ENCODE measurements at regions of chr21 and their contacts with region 1.

Region 1: DNA sequence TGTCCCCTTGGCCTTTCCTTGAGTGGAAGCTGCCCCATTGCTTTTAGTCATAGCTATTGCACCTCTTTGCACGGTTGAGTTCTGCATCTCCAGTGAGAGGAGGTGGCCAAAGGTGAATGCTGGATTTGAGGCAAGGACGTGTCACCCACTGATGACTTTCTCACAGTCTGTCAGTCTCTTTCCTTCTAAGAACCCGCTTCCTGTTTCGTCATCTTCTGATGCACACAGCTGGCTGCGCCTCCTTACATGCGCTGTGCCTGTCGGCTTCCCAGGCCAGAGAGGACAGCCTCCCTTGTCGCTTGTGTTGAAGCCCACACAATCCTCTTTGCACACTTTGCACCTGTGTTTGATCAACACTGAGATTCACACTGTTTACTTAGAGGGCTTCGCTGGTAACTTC is 41.8 kb upstream of the PWP2 start:
- DNase-seq: peak; percentile 82
- H3K4me3 Mint-ChIP-seq: peak overlapping the region; percentile 64
- H3K27ac Mint-ChIP-seq: peak overlapping the region; percentile 94
- H3K4me1 Mint-ChIP-seq: peaks cover 32% of the 10 kb centered on the region
- H3K27me3 Mint-ChIP-seq: no peaks in the 10 kb centered on the region

Region 2: GRCh38 chr21:43362321-43362791 is 703.1 kb before region 1 on chr21:
- CTCF ChIA-PET with region 1: no interaction called
- intact Hi-C with region 1: no loop called
- DNase-seq: peak; percentile 81
- H3K4me3 Mint-ChIP-seq: peak overlapping the region; percentile 68
- H3K27ac Mint-ChIP-seq: peak overlapping the region; percentile 27
- H3K4me1 Mint-ChIP-seq: peaks cover 26% of the 10 kb centered on the region
- H3K27me3 Mint-ChIP-seq: no peaks in the 10 kb centered on the region

Region 3: DNA sequence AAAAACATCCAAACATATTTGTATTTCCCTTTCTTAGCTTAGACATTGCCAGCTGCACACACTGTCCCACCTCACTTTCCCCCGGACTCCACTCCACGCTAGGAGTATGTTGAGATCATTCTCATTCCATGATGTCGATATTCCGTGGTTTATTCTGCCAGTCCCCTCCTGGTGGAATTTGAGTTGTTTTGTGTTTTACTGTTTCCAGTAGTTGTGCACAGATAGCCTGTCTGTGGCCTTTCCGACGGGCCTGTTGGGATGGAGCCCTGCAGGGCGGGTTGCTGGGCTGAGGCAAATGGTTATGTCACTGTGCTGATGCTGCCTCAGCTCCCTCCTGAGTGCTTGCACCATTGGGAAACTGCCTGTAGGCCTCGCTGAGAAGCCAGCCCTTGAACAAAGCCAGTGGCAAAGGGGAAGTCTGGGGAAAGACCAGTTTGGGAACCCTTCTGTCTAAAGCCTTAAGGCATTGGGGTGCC is 40.5 kb before region 1 on chr21:
- CTCF ChIA-PET with region 1: no interaction called
- intact Hi-C with region 1: loop called (anchors 1 kb)
- DNase-seq: peak; percentile 35
- H3K4me3 Mint-ChIP-seq: no peak overlapping the region
- H3K27ac Mint-ChIP-seq: peak overlapping the region; percentile 81
- H3K4me1 Mint-ChIP-seq: peaks cover 81% of the 10 kb centered on the region
- H3K27me3 Mint-ChIP-seq: no peaks in the 10 kb centered on the region

Region 4: DNA sequence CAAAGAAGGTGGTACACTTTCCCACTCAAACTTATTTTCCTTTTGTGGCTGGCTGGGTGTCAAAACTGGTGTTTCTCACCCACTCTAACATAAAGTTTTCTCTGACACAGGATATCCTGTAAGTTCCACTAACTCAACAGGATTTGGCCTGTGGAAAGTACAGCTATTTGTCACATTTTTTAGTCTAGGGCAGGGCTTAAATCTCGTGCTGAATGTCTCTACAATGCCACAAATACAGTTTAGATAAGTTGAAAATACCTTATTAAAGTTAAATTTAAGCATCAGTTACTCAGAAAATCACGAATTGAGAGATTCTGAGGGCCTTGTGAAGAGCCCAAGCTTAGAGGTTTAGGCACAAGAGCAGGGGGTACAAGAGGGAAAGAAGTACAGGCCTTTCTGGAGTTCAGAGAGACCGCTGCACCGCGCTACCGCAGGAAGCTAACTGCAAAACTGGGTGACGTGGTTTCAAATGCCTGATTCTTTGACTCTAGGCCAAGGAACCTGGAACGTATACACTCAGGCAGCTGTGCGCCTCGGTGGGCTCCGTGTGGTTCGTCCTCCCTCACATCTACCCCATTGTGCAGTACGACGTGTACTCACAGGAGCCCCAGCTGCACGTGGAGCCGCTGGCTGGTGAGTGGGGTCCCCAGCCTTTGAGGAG is 18.3 kb after region 1 on chr21:
- CTCF ChIA-PET with region 1: interaction called, 5 read pairs
- intact Hi-C with region 1: loop called (anchors 2 kb)
- DNase-seq: peak; percentile 83
- H3K4me3 Mint-ChIP-seq: peak overlapping the region; percentile 58
- H3K27ac Mint-ChIP-seq: peak overlapping the region; percentile 97
- H3K4me1 Mint-ChIP-seq: peaks cover 84% of the 10 kb centered on the region
- H3K27me3 Mint-ChIP-seq: no peaks in the 10 kb centered on the region

Region 5: DNA sequence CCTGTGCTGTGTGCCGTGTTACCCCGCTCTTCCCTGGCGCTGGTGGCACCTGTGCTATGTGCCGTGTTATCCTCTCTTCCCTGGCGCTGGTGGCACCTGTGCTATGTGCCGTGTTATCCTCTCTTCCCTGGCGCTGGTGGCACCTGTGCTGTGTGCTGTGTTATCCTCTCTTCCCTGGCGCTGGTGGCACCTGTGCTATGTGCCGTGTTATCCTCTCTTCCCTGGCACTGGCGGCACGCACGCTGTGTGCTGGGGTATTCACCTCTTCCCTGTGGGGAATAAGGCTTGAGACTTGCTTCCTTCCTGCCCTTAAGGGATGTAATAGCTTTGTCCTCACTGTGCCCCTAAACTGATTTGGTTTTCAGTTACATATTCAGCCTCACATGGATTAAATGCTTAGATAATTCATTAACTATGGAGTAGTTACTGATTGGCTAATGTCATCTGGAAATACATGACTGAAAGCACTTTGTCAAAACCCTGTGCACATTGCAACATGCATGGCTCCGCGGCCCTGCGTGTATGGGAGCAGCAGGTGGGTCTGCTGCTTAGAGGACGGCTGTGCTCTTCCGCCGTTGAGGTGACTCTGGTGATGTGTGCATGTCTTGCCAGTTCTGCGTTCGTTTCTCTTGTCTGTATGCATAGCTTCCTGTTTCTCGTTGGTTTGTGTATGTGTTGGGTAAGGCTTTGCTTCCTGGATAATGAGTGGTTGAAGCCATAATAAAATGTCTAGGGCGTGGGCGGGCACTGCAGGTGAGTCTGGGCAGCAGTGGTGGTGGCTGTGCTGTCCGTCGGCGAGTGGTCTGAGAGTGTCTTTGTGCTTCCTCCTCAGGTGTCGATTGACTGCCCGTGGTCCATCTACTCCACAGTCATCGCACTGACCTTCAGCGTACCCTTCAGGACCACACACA is 23.8 kb after region 1 on chr21:
- CTCF ChIA-PET with region 1: interaction called, 5 read pairs
- intact Hi-C with region 1: loop called (anchors 1 kb)
- DNase-seq: peak; percentile 59
- H3K4me3 Mint-ChIP-seq: peak overlapping the region; percentile 22
- H3K27ac Mint-ChIP-seq: peak overlapping the region; percentile 97
- H3K4me1 Mint-ChIP-seq: peaks cover 63% of the 10 kb centered on the region
- H3K27me3 Mint-ChIP-seq: no peaks in the 10 kb centered on the region